ENCODE measurements at regions of chr14 and their contacts with region 1.

Region 1: DNA sequence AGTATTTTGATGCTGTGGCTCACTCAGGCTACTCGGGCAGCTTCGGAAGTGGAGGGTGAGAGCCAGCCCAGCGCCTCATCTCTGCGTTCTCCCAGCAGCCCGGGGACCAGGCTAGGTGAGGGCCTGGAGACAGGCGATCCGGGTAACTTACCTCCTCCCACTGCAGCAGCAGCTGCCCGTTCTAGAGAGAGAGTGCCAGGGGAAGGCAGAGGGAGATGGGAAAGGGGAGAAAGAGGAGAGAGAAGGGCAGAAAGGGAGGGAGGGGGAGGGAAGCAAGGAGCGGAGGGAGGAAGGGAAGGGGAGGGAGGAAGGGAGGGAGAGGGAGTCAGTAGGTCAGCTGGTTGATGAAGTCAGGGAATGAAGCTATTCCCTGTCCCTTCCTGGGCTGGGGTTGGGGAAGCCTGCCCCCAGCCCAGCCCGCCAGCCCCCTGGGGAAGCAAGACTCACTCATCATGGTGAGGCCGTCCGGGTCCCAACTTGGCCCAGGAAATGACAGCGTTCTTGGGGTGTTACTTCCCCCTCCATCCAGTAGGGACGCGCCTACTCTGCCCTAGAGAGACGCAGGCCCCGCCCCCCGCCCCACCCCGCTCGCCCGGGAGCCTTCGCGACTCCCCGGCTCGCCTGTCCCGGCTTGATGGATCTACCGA is at the start of gene IFI27L2:
- DNase-seq: peak; percentile 83 to 87 (median 86)
- ATAC-seq: peak; percentile 88 to 97 (median 94)
- H3K4me3 ChIP-seq: peak within 1 kb of the TSS; percentile 3 to 73 (median 60)
- H3K27ac ChIP-seq: peak within 1 kb of the TSS; percentile 36 to 88 (median 78)
- H3K4me1 ChIP-seq: peaks cover 0 to 18% (median 8%) of the 10 kb centered on the region in 12 donors
- H3K27me3 ChIP-seq: no peaks in the 10 kb centered on the region
- CTCF ChIP-seq: peak in 11 of 12 donors; percentile 21 to 55 (median 33)
- POLR2A ChIP-seq: peak in 1 of 2 donors; percentile 42
- total RNA-seq, gene IFI27L2: 44.8 to 102 (median 61.4) TPM

Region 2: DNA sequence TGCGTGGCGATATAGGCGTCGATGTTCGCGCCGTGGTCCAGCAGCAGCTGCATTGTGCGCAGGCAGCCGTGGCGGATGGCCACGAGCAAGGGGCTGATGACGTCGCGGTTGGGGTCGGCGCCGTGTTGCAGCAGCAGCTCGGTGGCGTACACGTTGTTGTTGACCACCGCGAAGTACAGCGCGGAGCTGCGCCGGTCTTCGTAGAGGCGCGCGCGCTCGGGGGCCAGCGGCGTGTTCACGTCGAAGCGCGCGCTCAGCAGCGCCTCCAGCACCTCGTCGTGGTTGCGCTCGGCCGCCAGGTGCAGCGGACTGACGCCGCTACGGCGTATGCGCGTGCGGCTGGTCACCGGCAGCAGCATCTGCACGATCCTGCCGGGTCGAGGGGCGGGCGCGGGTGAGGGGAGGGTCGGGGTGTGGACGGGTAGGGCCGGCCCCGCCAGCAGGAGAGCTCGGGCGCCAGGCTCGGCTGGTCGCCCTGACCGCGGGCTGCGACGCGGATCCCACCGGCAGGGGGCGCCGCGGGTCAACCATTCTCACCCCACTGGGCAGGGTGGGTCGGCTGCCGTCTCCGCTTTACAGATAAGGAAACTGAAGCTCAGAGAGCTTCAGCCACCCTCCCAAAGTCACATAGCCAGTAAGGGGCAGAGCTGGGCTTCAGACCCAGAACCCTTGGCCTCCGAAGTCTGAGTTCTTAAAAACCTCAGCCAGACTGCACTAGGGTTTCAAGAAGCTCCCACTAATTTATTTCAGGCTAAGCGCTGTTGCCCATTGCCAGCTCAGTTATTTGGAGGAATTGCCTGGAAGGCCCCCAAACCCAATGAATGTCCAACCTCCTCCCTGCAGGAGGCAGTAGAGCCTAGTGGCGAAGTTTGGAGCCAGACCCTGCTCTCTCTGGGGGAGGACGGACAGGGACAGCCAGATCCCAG is 189.7 kb before region 1 on chr14:
- intact Hi-C with region 1: loop called in 2 of 10 experiments (anchors 5 to 10 kb)
- DNase-seq: peak; percentile 73 to 92 (median 79)
- ATAC-seq: peak; percentile 54 to 80 (median 72)
- H3K4me3 ChIP-seq: peak overlapping the region in 9 of 12 donors; percentile 15 to 50 (median 25)
- H3K27ac ChIP-seq: peak overlapping the region in 3 of 12 donors; percentile 24 to 75 (median 37)
- H3K4me1 ChIP-seq: peaks cover 0 to 20% (median 4%) of the 10 kb centered on the region in 12 donors
- H3K27me3 ChIP-seq: peaks cover 0 to 18% (median 7%) of the 10 kb centered on the region in 9 donors
- CTCF ChIP-seq: peak; percentile 75 to 93 (median 82)
- POLR2A ChIP-seq: no peak

Region 3: DNA sequence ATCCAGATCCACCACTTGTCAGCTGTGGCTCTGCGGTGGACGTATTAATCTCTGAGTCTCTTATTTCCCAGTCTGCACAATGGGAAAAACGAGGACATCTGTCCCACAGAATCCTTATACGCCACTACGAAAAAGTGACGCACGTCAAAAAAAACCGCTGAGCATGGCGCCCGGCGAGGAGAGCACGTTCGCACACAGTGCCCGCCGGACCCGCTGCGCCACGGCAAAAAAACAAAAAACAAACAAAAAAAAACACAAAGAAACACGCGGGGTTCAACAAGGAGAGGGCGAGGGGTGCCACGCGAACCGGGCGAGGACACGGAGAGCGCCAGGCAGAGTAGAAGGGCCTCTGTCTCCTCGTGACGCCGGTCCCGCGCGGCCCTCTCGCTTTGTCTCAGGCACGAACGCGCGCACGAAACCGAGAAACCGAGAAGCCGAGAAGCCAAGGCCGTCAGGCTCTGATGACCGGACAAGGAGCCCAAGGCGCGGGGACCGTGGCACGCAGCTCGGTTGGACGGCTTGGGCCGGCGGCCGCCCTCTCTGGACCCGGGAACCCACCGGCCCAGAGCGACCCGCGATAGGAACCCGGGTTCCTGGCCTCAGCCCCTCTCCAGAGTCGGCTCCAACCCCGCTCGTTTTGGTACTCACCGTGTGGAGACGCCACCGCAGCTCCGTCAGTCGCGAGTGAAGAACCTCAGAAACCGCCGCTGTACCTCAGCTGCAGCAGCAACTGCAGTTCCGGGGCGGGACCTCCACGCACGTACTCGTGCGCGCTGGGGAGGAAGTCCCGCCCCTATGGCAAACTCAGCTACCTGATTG is 48.6 kb before region 1 on chr14 and contains the start of gene DDX24:
- intact Hi-C with region 1: loop called in 4 of 10 experiments (anchors 2 to 5 kb)
- DNase-seq: peak; percentile 96 to 98 (median 98)
- ATAC-seq: peak; percentile 99 to 100 (median 100)
- H3K4me3 ChIP-seq: peak within 1 kb of the TSS; percentile 71 to 100 (median 90)
- H3K27ac ChIP-seq: peak within 1 kb of the TSS; percentile 81 to 95 (median 91)
- H3K4me1 ChIP-seq: peaks cover 12 to 54% (median 42%) of the 10 kb centered on the region in 12 donors
- H3K27me3 ChIP-seq: no peaks in the 10 kb centered on the region
- CTCF ChIP-seq: peak in 1 of 12 donors; percentile 13
- POLR2A ChIP-seq: peak; percentile 89 to 97
- total RNA-seq, gene DDX24: 161 to 268 (median 209) TPM

Region 4: DNA sequence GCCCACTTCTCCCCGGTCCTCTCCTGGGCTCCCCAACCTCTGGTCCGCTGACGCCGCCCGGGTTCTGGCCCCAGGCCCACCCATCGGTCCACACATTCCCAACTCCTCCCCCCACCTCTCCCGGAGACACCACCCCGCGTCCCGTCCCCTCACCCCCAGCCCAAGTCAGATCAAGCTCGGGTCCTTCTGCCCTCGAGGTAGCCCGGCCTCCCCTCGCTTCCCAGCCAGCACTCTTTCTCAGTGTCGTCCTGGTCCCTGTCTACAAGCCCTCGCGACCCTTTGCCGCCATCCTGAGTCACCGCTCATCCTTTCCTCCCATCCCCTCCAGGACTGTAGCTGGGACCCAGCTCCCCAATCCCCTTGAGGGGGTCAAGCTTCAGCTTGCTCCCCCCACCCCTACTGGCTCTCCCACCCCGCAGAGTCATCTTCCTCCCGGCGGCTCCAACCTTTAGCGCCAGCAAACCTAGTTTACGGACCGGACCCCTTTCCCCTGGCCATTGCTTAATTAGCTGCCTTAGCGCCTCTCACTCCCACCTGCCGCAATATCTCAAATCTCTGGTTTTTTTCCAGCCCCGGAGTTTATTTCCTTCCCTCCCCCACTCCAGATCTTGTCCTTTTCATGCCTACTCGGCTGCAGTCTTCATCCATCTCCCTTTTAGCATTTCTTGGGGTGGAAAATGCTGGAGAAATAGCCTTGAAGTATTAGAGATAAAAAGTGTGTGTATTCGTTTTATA is 45.9 kb after region 1 on chr14:
- intact Hi-C with region 1: loop called in 1 of 10 experiments (anchors 5 kb)
- DNase-seq: peak in 2 of 5 donors; percentile 14 to 28
- ATAC-seq: peak in 1 of 4 donors; percentile 3
- H3K4me3 ChIP-seq: peak overlapping the region in 9 of 12 donors; percentile 43 to 82 (median 66)
- H3K27ac ChIP-seq: no peak overlapping the region
- H3K4me1 ChIP-seq: peaks cover 0 to 23% (median 14%) of the 10 kb centered on the region in 12 donors
- H3K27me3 ChIP-seq: peaks cover 0 to 58% (median 14%) of the 10 kb centered on the region in 9 donors
- CTCF ChIP-seq: no peak
- POLR2A ChIP-seq: no peak

Measured in heart left ventricle (tissue), 16 donors.